GM10248 (cell line): ENCODE measurements at regions of chr1 and their contacts with region 1.

Region 1: GRCh38 chr1:46724991-46725735 is 6.2 kb upstream of the EFCAB14 start:
- DNase-seq: peak; percentile 43
- CTCF ChIP-seq: peak; percentile 89

Region 2: GRCh38 chr1:46616277-46617107 is 108.7 kb before region 1 on chr1 and contains the start of gene MOB3C:
- CTCF ChIA-PET with region 1: interaction called, 35 read pairs
- POLR2A ChIA-PET with region 1: no interaction called
- DNase-seq: peak; percentile 81
- CTCF ChIP-seq: no peak

Region 3: GRCh38 chr1:46622344-46622743 is 102.8 kb before region 1 on chr1:
- CTCF ChIA-PET with region 1: interaction called, 35 read pairs
- POLR2A ChIA-PET with region 1: no interaction called
- DNase-seq: no peak
- CTCF ChIP-seq: peak; percentile 32

Region 4: GRCh38 chr1:46675549-46676314 is 49.4 kb before region 1 on chr1:
- CTCF ChIA-PET with region 1: interaction called, 10 read pairs
- POLR2A ChIA-PET with region 1: no interaction called
- DNase-seq: peak; percentile 38
- CTCF ChIP-seq: no peak

Region 5: GRCh38 chr1:46708121-46708520 is 17.0 kb before region 1 on chr1:
- CTCF ChIA-PET with region 1: interaction called, 15 read pairs
- POLR2A ChIA-PET with region 1: no interaction called
- DNase-seq: no peak
- CTCF ChIP-seq: no peak

Region 6: DNA sequence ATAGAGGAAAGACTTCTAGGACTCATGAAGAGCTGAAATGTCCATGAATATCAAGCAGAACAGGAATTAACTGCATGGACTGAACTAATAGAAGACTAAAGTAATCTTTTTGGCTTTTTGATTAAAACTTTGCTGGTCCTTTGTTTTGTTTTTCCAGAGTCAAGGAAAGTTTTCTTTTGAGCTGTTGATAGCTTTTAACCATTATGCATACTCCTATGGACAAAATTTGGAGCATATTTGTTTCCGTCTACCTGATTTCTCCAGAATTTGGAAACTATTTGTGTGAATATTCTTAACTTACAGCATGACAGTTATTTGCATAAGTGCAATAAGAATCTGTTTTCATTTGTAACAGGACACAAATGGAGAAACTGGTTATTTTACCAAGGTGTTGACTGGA is 49.1 kb after region 1 on chr1:
- CTCF ChIA-PET with region 1: no interaction called
- POLR2A ChIA-PET with region 1: no interaction called
- DNase-seq: no peak
- CTCF ChIP-seq: no peak